A673 (cell line): ENCODE measurements at regions of chr18 and their contacts with region 1.

Region 1: GRCh38 chr18:2547477-2548087 is 23.7 kb downstream of the METTL4 start:
- DNase-seq: peak; percentile 64
- H3K4me3 ChIP-seq: no peak overlapping the region
- H3K27ac ChIP-seq: no peak overlapping the region
- H3K4me1 ChIP-seq: no peaks in the 10 kb centered on the region
- H3K27me3 ChIP-seq: no peaks in the 10 kb centered on the region
- CTCF ChIP-seq: peak; percentile 70

Region 2: GRCh38 chr18:1585879-1586488 is 961.6 kb before region 1 on chr18:
- CTCF ChIA-PET with region 1: no interaction called
- POLR2A ChIA-PET with region 1: no interaction called
- intact Hi-C with region 1: loop called (anchors 5 kb)
- DNase-seq: peak; percentile 60
- H3K4me3 ChIP-seq: no peak overlapping the region
- H3K27ac ChIP-seq: no peak overlapping the region
- H3K4me1 ChIP-seq: no peaks in the 10 kb centered on the region
- H3K27me3 ChIP-seq: peaks cover 8% of the 10 kb centered on the region
- CTCF ChIP-seq: peak; percentile 72

Region 3: GRCh38 chr18:1914490-1914889 is 633.1 kb before region 1 on chr18:
- CTCF ChIA-PET with region 1: no interaction called
- POLR2A ChIA-PET with region 1: no interaction called
- intact Hi-C with region 1: loop called (anchors 5 kb)
- DNase-seq: peak; percentile 1
- H3K4me3 ChIP-seq: no peak overlapping the region
- H3K27ac ChIP-seq: no peak overlapping the region
- H3K4me1 ChIP-seq: no peaks in the 10 kb centered on the region
- H3K27me3 ChIP-seq: no peaks in the 10 kb centered on the region
- CTCF ChIP-seq: 0 out of 2 replicates have a peak, but pooled peaks have one; percentile 27

Region 4: GRCh38 chr18:2104620-2105462 is 442.7 kb before region 1 on chr18:
- CTCF ChIA-PET with region 1: no interaction called
- POLR2A ChIA-PET with region 1: no interaction called
- intact Hi-C with region 1: loop called (anchors 2 kb)
- DNase-seq: peak; percentile 70
- H3K4me3 ChIP-seq: no peak overlapping the region
- H3K27ac ChIP-seq: no peak overlapping the region
- H3K4me1 ChIP-seq: no peaks in the 10 kb centered on the region
- H3K27me3 ChIP-seq: no peaks in the 10 kb centered on the region
- CTCF ChIP-seq: peak; percentile 89

Region 5: DNA sequence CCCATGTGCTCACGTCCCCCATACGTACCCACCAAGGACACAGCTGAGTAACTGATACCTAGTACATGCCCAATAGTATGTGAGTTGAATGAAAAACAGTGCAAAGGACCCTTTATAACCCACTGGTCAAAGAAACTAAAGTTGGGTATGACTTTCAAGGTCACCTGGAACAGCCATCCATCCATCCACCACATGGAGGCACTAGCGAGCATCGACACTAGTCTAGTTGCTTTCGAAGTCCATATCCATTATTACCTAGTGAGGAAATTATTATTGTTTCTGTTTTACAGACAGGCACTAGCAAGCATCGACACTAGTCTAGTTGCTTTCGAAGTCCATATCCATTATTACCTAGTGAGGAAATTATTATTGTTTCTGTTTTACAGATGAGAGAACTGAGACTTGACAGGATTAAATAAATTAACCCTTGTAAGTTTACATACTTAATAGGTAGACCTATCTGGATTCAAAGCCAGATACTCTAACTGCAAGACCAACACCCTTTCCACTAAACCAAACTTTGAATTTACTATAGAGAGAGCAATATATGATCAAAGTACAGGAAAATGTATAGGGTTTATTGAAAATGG is 209.9 kb before region 1 on chr18:
- CTCF ChIA-PET with region 1: interaction called, 7 read pairs
- POLR2A ChIA-PET with region 1: no interaction called
- intact Hi-C with region 1: loop called (anchors 1 kb)
- DNase-seq: peak; percentile 45
- H3K4me3 ChIP-seq: no peak overlapping the region
- H3K27ac ChIP-seq: no peak overlapping the region
- H3K4me1 ChIP-seq: no peaks in the 10 kb centered on the region
- H3K27me3 ChIP-seq: peaks cover 17% of the 10 kb centered on the region
- CTCF ChIP-seq: peak; percentile 66